ENCODE measurements at regions of chr20 and their contacts with region 1.

Region 1: GRCh38 chr20:43590392-43591323 is at the start of gene IFT52:
- DNase-seq: peak; percentile 81 to 95
- H3K4me3 ChIP-seq: peak within 1 kb of the TSS; percentile 87 to 93
- H3K27ac ChIP-seq: peak within 1 kb of the TSS; percentile 75 to 85
- H3K4me1 ChIP-seq: peaks cover 6 to 12% of the 10 kb centered on the region in 2 donors
- H3K27me3 ChIP-seq: no peaks in the 10 kb centered on the region
- CTCF ChIP-seq: no peak
- total RNA-seq, gene IFT52: 15.2 TPM

Region 2: DNA sequence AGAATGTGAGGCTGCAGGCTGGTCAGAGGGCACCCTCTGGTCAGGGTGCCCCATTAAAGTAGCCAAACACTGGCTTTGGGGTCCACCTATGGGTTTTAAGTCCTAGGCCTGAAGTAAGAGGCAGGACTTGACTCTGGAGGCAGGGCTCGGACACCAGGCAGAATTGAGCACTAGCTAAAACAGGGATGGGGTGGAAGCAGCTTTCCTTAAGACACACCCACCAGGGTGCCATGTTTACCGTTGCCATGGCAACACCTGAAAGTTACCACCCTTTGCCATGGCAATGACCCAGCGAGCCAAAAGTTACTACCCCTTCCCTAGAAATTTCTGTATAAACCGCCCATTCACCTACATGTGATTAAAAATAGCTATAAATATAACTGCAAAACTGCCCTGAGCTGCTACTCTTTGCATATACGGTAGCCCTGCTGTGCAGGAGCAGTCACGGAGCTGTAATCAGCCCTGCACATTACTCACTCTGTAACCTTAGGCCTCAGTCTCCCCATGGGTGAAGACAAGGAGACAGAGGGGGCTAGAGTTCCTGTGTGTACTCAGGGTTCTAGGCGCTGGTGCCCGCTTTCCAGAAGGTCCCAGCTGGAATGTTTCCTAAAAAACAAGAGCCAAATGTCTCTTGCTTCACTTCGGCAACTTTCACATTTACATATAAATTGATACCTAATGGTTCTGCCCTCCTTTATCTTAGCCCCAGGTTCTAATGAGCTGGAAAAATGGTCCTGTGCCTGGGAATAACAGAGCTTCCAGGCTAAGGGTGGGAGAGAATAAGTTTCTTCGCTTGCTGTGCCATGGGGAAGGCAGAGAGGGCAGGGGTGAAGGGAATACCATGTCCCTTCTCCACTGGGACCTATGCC is 160.2 kb before region 1 on chr20:
- intact Hi-C with region 1: no loop called
- DNase-seq: no peak
- H3K4me3 ChIP-seq: no peak overlapping the region
- H3K27ac ChIP-seq: no peak overlapping the region
- H3K4me1 ChIP-seq: no peaks in the 10 kb centered on the region
- H3K27me3 ChIP-seq: no peaks in the 10 kb centered on the region
- CTCF ChIP-seq: no peak

Region 3: DNA sequence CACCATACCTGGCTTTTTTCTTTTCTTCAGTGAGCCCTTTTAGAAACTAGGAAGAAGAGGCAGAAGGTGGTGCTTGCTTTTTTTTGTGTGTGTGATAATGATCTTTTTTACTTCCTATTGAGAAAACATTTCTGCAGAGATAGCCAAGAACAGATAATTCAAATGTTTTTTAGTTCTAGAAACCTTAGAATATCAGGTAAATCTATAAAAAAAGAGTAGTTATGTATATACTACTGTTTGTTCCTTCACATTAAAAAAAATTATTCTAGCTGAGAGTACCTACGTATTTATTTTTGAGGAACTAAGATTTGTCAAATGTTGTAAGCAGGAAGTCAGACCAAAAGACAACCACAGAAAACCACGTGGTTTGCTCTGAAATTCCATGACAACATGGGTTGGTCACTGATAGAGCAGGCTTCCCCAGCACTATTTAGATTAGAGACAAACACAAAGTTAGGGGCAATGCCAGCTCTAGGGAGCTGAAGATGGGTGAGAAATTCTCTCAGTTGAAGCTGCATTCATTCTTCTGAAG is 1388.5 kb after region 1 on chr20:
- intact Hi-C with region 1: loop called (anchors 10 kb)
- DNase-seq: peak in 1 of 2 donors; percentile 69
- H3K4me3 ChIP-seq: no peak overlapping the region
- H3K27ac ChIP-seq: peak overlapping the region in 1 of 2 donors; percentile 18
- H3K4me1 ChIP-seq: no peaks in the 10 kb centered on the region
- H3K27me3 ChIP-seq: no peaks in the 10 kb centered on the region
- CTCF ChIP-seq: no peak

Region 4: GRCh38 chr20:45347936-45348778 is 1757.5 kb after region 1 on chr20 and contains the start of gene SDC4:
- intact Hi-C with region 1: no loop called
- DNase-seq: peak in 1 of 2 donors; percentile 85
- H3K4me3 ChIP-seq: peak within 1 kb of the TSS; percentile 60 to 80
- H3K27ac ChIP-seq: peak within 1 kb of the TSS; percentile 93 to 96
- H3K4me1 ChIP-seq: peaks cover 30 to 33% of the 10 kb centered on the region in 2 donors
- H3K27me3 ChIP-seq: no peaks in the 10 kb centered on the region
- CTCF ChIP-seq: no peak
- total RNA-seq, gene SDC4: 63.8 TPM

Measured in ascending aorta (tissue), 2 donors.